Heart right ventricle (tissue), 16 donors: ENCODE measurements at regions of chr16 and their contacts with region 1.

Region 1: GRCh38 chr16:2009789-2010510 is at the start of gene ZNF598:
- DNase-seq: peak; percentile 84 to 87
- ATAC-seq: peak; percentile 94 to 98 (median 97)
- H3K4me3 ChIP-seq: peak within 1 kb of the TSS; percentile 69 to 99 (median 90)
- H3K27ac ChIP-seq: peak within 1 kb of the TSS; percentile 76 to 96 (median 92)
- H3K4me1 ChIP-seq: peaks cover 23 to 50% (median 40%) of the 10 kb centered on the region in 9 donors
- H3K27me3 ChIP-seq: no peaks in the 10 kb centered on the region
- CTCF ChIP-seq: peak in 3 of 9 donors; percentile 2 to 25 (median 20)
- total RNA-seq, gene ZNF598: 9.5 to 24.7 (median 14.2) TPM

Region 2: GRCh38 chr16:2063861-2064260 is 53.9 kb after region 1 on chr16:
- intact Hi-C with region 1: loop called in 1 of 10 experiments (anchors 10 kb)
- DNase-seq: no peak
- ATAC-seq: no peak
- H3K4me3 ChIP-seq: no peak overlapping the region
- H3K27ac ChIP-seq: no peak overlapping the region
- H3K4me1 ChIP-seq: no peaks in the 10 kb centered on the region
- H3K27me3 ChIP-seq: no peaks in the 10 kb centered on the region
- CTCF ChIP-seq: no peak

Region 3: DNA sequence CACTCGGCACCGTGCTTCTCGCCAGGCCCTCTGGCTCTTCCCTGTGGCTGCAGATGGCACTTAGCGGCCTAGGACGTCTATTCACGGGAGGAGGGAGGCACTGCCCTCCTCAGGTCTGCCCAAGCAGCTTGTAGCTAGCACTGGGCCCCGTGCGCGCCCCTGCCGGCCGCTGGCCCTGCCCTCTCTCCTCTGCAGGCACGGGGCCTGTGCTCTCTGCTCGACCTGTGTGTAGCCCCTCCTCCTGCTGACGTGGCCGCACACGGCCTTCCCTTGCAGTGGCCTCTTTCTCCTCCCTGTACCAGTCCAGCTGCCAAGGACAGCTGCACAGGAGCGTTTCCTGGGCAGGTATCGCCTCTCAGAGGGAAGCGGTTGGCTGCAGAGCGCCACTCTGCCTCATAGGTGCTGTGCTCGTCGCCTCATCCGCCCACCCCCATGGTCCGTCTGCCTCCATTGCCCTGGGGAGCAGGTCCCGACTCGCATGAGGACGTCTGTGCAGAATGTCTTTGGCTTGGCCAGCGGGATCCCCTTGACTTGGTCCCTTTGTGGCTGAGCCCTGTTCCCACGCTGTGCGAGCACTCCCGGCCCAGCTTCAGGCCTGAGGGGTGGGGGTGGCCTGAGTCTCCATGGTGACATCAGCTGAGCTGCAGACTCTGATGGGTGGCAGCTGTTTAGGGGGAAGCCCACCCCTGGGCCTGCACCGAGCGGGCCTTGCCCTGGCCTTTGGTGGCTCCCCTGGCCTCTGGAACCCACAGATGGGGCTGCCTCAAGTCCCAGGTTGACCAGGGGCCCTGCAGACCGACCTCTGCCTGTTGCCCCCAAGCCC is 72.4 kb after region 1 on chr16:
- intact Hi-C with region 1: no loop called
- DNase-seq: peak; percentile 34 to 43
- ATAC-seq: peak; percentile 20 to 53 (median 33)
- H3K4me3 ChIP-seq: no peak overlapping the region
- H3K27ac ChIP-seq: peak overlapping the region in 8 of 10 donors; percentile 12 to 64 (median 50)
- H3K4me1 ChIP-seq: peaks cover 5 to 33% (median 28%) of the 10 kb centered on the region in 9 donors
- H3K27me3 ChIP-seq: no peaks in the 10 kb centered on the region
- CTCF ChIP-seq: peak in 4 of 9 donors; percentile 11 to 27 (median 16)

Region 4: GRCh38 chr16:2223375-2224182 is 213.6 kb after region 1 on chr16 and contains the start of gene E4F1:
- intact Hi-C with region 1: loop called in 1 of 10 experiments (anchors 5 kb)
- DNase-seq: peak; percentile 100
- ATAC-seq: peak; percentile 99 to 100 (median 100)
- H3K4me3 ChIP-seq: peak within 1 kb of the TSS; percentile 69 to 96 (median 92)
- H3K27ac ChIP-seq: peak within 1 kb of the TSS; percentile 49 to 96 (median 90)
- H3K4me1 ChIP-seq: peaks cover 10 to 32% (median 25%) of the 10 kb centered on the region in 9 donors
- H3K27me3 ChIP-seq: no peaks in the 10 kb centered on the region
- CTCF ChIP-seq: peak in 4 of 9 donors; percentile 3 to 19 (median 10)
- total RNA-seq, gene E4F1: 8.4 to 16.3 (median 10.7) TPM